ENCODE measurements at regions of chr1 and their contacts with region 1.

Region 1: DNA sequence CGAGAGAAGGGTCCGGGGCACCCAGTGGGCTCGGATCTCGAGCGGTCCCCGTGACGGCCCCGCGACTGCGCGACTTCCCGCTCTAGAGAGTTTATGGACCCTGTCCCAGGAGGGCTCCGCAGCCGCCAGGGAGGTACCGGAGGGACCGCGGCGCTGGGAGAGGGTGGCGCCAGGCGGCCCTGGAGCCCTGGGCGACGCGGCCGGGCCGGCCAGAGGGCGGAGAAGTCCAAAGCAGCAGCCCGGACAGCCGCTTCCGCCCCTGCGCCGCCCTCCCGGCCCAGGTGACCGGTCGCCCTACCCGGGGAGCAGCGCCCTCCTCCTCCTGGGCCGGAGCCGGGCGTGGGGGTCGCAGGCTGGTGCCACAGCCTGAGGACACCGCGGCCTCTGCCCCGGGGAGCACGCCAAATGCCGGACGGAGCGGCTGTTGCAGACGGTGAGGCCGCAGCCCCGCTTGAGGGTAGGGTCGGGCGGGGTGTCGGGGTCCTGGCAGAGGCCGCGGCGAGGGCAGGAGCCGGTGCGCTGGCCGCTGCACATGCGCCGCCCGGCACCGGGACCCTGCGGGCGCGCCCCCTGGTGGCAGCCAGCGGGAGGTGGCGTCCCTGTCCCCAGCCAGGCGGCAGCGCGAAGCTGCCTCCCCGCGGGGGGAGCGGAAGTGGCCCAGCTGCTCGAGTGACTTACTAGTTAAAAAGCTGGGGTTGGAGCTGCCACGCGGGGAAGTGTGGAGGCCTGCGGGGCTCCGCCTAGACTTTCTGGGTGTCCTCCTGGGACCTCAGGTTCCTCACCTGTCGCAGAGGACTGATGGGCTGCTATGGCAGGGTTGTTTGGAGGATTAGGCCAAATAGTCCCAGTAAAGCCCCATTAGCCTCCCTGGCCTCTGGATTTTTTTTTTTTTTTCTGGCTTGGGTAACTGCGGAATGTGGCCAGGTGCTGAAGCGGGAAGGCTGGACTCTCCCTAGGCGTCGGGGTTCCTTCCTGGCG is 20.9 kb upstream of the ZNF678 start:
- DNase-seq: peak; percentile 93

Region 2: GRCh38 chr1:227489572-227489971 is 52.9 kb before region 1 on chr1:
- intact Hi-C with region 1: loop called (anchors 5 kb)
- DNase-seq: no peak

Region 3: GRCh38 chr1:227563324-227564201 is 21.1 kb after region 1 on chr1 and contains the start of gene ZNF678:
- intact Hi-C with region 1: loop called (anchors 1 kb)
- DNase-seq: peak; percentile 93
- total RNA-seq, gene ZNF678: 4.5 TPM

Region 4: GRCh38 chr1:227728059-227728891 is 185.8 kb after region 1 on chr1:
- intact Hi-C with region 1: loop called (anchors 5 kb)
- DNase-seq: peak; percentile 88

Region 5: GRCh38 chr1:227946624-227947385 is 404.4 kb after region 1 on chr1:
- intact Hi-C with region 1: loop called (anchors 2 kb)
- DNase-seq: peak; percentile 88